Activated CD4-positive, alpha-beta memory T cell treated with anti-CD3 and anti-CD28 coated beads for 36 hours (primary cell): ENCODE measurements at regions of chr1 and their contacts with region 1.

Region 1: DNA sequence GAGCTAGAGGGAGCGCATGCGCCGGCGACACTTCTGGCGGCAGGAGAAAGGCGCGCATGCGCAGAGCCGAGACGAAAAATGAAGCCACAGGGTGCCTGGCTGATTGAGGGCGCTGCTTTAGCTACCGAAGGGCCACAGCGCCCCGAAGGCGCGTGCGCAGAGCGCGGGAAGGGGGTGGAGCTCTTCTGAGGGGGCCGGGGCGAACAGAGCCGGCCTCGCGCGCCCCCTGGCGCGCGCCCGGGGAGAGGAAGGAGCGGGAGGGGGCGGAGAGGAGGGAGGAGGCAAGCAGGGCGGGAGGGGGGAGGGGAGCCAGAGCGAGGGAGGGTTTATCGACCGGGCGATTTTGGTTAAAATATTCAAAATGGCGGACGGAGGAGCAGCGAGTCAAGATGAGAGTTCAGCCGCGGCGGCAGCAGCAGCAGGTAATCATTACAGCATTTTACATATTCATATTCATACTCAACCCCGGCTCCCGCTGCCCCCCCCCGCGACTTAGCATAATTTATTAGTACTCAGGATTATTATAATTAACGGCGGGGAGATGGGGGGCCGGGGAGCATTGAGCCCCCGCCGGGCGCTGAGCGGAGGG is at the start of gene POU2F1:
- DNase-seq: peak; percentile 99
- H3K4me3 Mint-ChIP-seq: peak within 1 kb of the TSS; percentile 95
- H3K27ac Mint-ChIP-seq: peak within 1 kb of the TSS; percentile 98
- H3K4me1 Mint-ChIP-seq: peaks cover 45% of the 10 kb centered on the region
- H3K27me3 Mint-ChIP-seq: peaks cover 1% of the 10 kb centered on the region
- total RNA-seq, gene POU2F1: 17.7 to 20.1 TPM

Region 2: GRCh38 chr1:166875734-166876539 is 344.7 kb before region 1 on chr1 and contains the start of gene TADA1:
- CTCF ChIA-PET with region 1: interaction called, 3 read pairs
- POLR2A ChIA-PET with region 1: no interaction called
- intact Hi-C with region 1: loop called (anchors 1 kb)
- DNase-seq: peak; percentile 100
- H3K4me3 Mint-ChIP-seq: peak within 1 kb of the TSS; percentile 96
- H3K27ac Mint-ChIP-seq: peak within 1 kb of the TSS; percentile 97
- H3K4me1 Mint-ChIP-seq: peaks cover 47% of the 10 kb centered on the region
- H3K27me3 Mint-ChIP-seq: no peaks in the 10 kb centered on the region
- total RNA-seq, gene TADA1: 16.9 to 18.3 TPM

Region 3: DNA sequence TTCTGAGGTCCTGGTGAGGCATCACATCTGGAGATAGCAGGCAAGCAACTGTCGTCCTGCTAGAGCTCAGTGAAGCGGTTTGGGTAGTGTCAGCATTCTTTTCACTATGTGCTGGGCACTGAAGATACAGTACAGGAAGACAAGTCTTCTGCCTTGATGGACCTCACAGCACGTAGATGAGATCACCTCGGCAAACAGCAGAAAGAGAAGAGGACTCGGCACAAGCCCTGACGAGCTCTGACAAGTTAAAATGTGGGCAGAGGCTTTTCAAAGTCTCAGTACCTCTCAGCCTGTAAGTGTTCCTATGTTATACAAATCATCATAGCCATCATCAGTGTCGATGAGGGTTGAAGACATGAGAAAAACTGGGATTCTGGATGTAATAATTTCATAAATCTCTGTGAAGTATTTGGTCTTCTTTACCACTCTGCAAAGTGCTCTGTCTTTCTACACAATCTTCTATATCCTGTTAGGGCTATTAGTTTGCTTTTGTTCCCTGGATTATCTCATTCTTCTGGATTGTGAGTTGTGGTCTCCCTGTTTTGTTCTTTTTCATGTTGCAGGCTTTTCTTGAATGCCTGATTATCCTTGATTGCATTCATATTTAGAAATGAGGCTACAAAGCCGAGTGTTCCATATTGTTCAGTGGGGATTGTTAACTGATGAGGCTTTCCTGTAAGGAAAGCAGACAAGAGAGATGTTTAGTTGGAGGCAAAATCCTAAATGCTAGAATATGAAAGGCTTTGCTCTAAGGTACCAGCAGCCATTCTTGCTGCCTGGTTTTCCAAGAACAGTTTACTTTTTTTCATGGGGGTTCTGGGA is 207.3 kb before region 1 on chr1:
- CTCF ChIA-PET with region 1: no interaction called
- POLR2A ChIA-PET with region 1: no interaction called
- intact Hi-C with region 1: no loop called
- DNase-seq: no peak
- H3K4me3 Mint-ChIP-seq: no peak overlapping the region
- H3K27ac Mint-ChIP-seq: no peak overlapping the region
- H3K4me1 Mint-ChIP-seq: no peaks in the 10 kb centered on the region
- H3K27me3 Mint-ChIP-seq: peaks cover 10% of the 10 kb centered on the region

Region 4: GRCh38 chr1:167066333-167067122 is 154.1 kb before region 1 on chr1:
- CTCF ChIA-PET with region 1: interaction called, 44 read pairs
- POLR2A ChIA-PET with region 1: no interaction called
- intact Hi-C with region 1: loop called (anchors 1 kb)
- DNase-seq: peak; percentile 83
- H3K4me3 Mint-ChIP-seq: peak overlapping the region; percentile 30
- H3K27ac Mint-ChIP-seq: no peak overlapping the region
- H3K4me1 Mint-ChIP-seq: peaks cover 2% of the 10 kb centered on the region
- H3K27me3 Mint-ChIP-seq: no peaks in the 10 kb centered on the region

Region 5: DNA sequence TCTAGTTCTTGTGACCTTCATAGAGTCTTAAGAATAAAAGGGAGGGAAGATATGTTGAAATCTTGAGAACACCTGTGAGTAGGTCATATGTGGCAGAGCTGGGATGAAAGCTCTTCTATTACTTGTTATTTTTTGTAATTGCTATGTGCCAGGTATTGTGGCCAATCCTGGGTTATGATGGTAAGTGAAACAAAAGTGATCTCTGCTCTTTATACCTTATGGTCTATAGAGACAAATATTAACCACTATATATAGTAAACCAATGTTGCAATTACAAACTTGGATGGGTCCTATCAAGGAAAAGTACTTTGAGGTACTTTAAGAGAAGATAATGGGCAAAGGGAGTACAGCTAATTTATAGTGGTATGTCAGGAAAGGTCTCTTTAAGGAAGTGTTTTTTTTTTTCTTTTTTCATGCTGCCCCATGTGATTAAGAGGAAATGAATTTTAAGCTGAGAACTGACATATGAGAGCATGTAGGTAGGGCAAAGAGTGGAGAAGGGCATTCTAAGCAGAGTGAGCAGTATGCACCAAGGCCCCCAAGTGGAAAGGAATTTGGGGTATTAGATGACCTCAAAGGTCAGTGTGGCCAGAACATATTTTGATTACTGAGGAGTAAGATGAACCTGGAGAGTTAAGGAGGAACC is 43.3 kb after region 1 on chr1:
- CTCF ChIA-PET with region 1: interaction called, 9 read pairs
- POLR2A ChIA-PET with region 1: no interaction called
- intact Hi-C with region 1: loop called (anchors 2 kb)
- DNase-seq: no peak
- H3K4me3 Mint-ChIP-seq: no peak overlapping the region
- H3K27ac Mint-ChIP-seq: no peak overlapping the region
- H3K4me1 Mint-ChIP-seq: peaks cover 23% of the 10 kb centered on the region
- H3K27me3 Mint-ChIP-seq: no peaks in the 10 kb centered on the region

Region 6: GRCh38 chr1:167499664-167500101 is 279.1 kb after region 1 on chr1:
- CTCF ChIA-PET with region 1: interaction called, 5 read pairs
- POLR2A ChIA-PET with region 1: interaction called, 14 read pairs
- intact Hi-C with region 1: loop called (anchors 5 kb)
- DNase-seq: peak; percentile 54
- H3K4me3 Mint-ChIP-seq: no peak overlapping the region
- H3K27ac Mint-ChIP-seq: peak overlapping the region; percentile 87
- H3K4me1 Mint-ChIP-seq: peaks cover 99% of the 10 kb centered on the region
- H3K27me3 Mint-ChIP-seq: no peaks in the 10 kb centered on the region

Region 7: DNA sequence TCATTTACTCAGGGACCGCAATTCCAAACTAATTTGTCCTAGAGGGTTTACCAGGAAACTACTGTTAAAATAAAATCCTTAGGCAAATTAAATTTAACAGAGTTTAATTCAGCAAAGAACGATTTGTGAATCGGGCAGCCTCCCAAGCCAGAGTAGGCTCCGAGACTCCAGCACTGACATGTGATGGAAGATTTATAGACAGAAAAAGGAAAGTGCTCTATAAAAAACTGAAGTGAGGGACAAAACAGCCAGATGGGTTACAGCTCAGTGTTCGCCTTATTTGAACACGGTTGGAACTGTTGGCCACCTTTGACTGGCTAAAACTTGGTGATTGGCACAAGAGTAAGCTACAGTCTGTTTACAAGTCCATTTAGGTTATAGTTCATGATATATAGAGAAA is 374.2 kb after region 1 on chr1:
- CTCF ChIA-PET with region 1: no interaction called
- POLR2A ChIA-PET with region 1: no interaction called
- intact Hi-C with region 1: no loop called
- DNase-seq: no peak
- H3K4me3 Mint-ChIP-seq: no peak overlapping the region
- H3K27ac Mint-ChIP-seq: no peak overlapping the region
- H3K4me1 Mint-ChIP-seq: peaks cover 3% of the 10 kb centered on the region
- H3K27me3 Mint-ChIP-seq: no peaks in the 10 kb centered on the region

Region 8: GRCh38 chr1:167627865-167628641 is 407.4 kb after region 1 on chr1:
- CTCF ChIA-PET with region 1: interaction called, 3 read pairs
- POLR2A ChIA-PET with region 1: interaction called, 4 read pairs
- intact Hi-C with region 1: loop called (anchors 5 kb)
- DNase-seq: peak; percentile 90
- H3K4me3 Mint-ChIP-seq: peak overlapping the region; percentile 92
- H3K27ac Mint-ChIP-seq: peak overlapping the region; percentile 99
- H3K4me1 Mint-ChIP-seq: peaks cover 46% of the 10 kb centered on the region
- H3K27me3 Mint-ChIP-seq: no peaks in the 10 kb centered on the region